ENCODE measurements at regions of chr11 and their contacts with region 1.

Region 1: DNA sequence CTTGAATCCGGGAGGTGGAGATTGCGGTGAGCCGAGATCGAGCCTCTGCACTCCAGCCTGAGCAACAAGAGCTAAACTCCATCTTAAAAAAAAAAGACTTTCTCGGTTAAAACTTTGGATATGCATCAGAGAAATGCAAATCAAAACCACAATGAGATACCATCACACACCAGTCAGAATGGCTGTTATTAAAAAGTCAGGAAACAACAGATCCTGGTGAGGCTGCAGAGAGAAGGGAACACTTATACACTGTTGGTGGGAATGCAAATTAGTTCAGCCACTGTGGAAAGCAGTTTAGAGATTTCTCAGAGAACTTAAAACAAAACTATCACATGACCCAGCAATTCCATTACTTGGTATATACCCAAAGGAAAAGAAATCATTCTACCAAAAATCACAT is 619.4 kb upstream of the KIRREL3 start:
- DNase-seq: no peak
- ATAC-seq: no peak
- H3K4me3 ChIP-seq: no peak overlapping the region
- H3K27ac ChIP-seq: no peak overlapping the region
- H3K4me1 ChIP-seq: no peaks in the 10 kb centered on the region
- H3K27me3 ChIP-seq: no peaks in the 10 kb centered on the region
- CTCF ChIP-seq: no peak

Region 2: GRCh38 chr11:127726367-127726766 is 106.4 kb after region 1 on chr11:
- CTCF ChIA-PET with region 1: interaction called, 11 read pairs
- POLR2A ChIA-PET with region 1: no interaction called
- in situ Hi-C with region 1: no loop called
- intact Hi-C with region 1: no loop called
- DNase-seq: no peak
- ATAC-seq: no peak
- H3K4me3 ChIP-seq: no peak overlapping the region
- H3K27ac ChIP-seq: no peak overlapping the region
- H3K4me1 ChIP-seq: no peaks in the 10 kb centered on the region
- H3K27me3 ChIP-seq: no peaks in the 10 kb centered on the region
- CTCF ChIP-seq: no peak